Esophagus muscularis mucosa (tissue), 4 donors: ENCODE measurements at regions of chr13 and their contacts with region 1.

Region 1: GRCh38 chr13:35789335-35790165 is 313.1 kb upstream of the MAB21L1 start:
- DNase-seq: no peak
- H3K4me3 ChIP-seq: no peak overlapping the region
- H3K27ac ChIP-seq: no peak overlapping the region
- H3K4me1 ChIP-seq: peaks cover 0 to 63% (median 56%) of the 10 kb centered on the region in 4 donors
- H3K27me3 ChIP-seq: no peaks in the 10 kb centered on the region
- CTCF ChIP-seq: peak; percentile 50 to 66 (median 65)
- EP300 ChIP-seq: no peak
- POLR2A ChIP-seq: no peak

Region 2: GRCh38 chr13:34941835-34942731 is 847.5 kb before region 1 on chr13 and contains the start of gene NBEA:
- intact Hi-C with region 1: loop called (anchors 10 kb)
- DNase-seq: peak; percentile 95
- H3K4me3 ChIP-seq: peak within 1 kb of the TSS; percentile 84 to 95 (median 92)
- H3K27ac ChIP-seq: peak within 1 kb of the TSS; percentile 79 to 92 (median 87)
- H3K4me1 ChIP-seq: peaks cover 11 to 42% (median 34%) of the 10 kb centered on the region in 4 donors
- H3K27me3 ChIP-seq: no peaks in the 10 kb centered on the region
- CTCF ChIP-seq: peak in 2 of 3 experiments; percentile 32 to 60
- EP300 ChIP-seq: no peak
- POLR2A ChIP-seq: no peak
- total RNA-seq, gene NBEA: 21.0 to 30.8 (median 25.0) TPM

Region 3: GRCh38 chr13:35630551-35631275 is 158.8 kb before region 1 on chr13:
- intact Hi-C with region 1: loop called (anchors 1 kb)
- DNase-seq: no peak
- H3K4me3 ChIP-seq: no peak overlapping the region
- H3K27ac ChIP-seq: no peak overlapping the region
- H3K4me1 ChIP-seq: no peaks in the 10 kb centered on the region
- H3K27me3 ChIP-seq: no peaks in the 10 kb centered on the region
- CTCF ChIP-seq: peak; percentile 64 to 74 (median 72)
- EP300 ChIP-seq: no peak
- POLR2A ChIP-seq: no peak